ENCODE measurements at regions of chr5 and their contacts with region 1.

Region 1: GRCh38 chr5:170740551-170741205 is 42.8 kb upstream of the GABRP start:
- DNase-seq: no peak
- ATAC-seq: no peak
- H3K4me3 ChIP-seq: no peak overlapping the region
- H3K27ac ChIP-seq: no peak overlapping the region
- H3K4me1 ChIP-seq: peaks cover 0 to 19% (median 14%) of the 10 kb centered on the region in 12 donors
- H3K27me3 ChIP-seq: peaks cover 0 to 15% (median 0%) of the 10 kb centered on the region in 9 donors
- CTCF ChIP-seq: no peak
- POLR2A ChIP-seq: no peak

Region 2: DNA sequence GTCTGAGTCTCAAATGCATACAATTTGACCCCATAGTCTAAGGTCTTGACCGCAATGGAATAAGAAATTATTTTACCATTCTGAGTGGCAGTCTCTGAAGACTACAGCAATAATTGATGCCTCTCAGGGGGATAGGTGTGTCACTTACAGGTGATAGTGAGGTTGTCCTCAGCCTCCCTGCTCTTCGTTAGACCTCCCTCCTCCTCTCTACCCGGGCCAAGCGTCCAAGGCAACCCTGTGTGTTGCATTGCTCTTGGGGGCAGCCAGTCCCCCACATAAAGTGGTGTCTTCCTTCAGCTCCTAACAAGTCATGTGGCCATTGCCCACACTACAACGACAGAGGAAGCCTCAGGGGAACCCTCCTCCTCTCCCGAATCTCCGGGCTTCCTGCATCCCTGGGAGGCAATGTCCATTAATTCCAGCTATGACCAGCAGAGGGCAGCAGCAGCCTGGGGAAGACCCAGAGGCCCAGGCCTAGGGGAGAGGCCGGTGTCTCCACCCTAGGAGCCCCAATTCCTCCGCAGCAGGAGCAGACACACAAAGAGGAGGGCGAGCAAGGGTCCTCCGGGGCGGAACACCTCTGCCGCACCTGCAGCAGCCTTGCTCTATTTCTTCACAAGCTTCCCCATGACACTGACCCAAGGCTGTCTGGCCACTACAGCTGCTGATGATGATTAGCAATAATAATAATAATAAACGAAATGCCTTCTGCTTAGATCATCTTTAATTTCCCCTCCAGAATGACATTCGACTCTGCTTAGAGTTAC is 102.0 kb before region 1 on chr5:
- intact Hi-C with region 1: loop called in 8 of 10 experiments (anchors 2 to 10 kb)
- DNase-seq: peak; percentile 52 to 81 (median 62)
- ATAC-seq: peak; percentile 18 to 82 (median 67)
- H3K4me3 ChIP-seq: no peak overlapping the region
- H3K27ac ChIP-seq: no peak overlapping the region
- H3K4me1 ChIP-seq: peaks cover 0 to 16% (median 11%) of the 10 kb centered on the region in 12 donors
- H3K27me3 ChIP-seq: peaks cover 0 to 3% (median 0%) of the 10 kb centered on the region in 9 donors
- CTCF ChIP-seq: peak; percentile 78 to 94 (median 88)
- POLR2A ChIP-seq: no peak

Region 3: DNA sequence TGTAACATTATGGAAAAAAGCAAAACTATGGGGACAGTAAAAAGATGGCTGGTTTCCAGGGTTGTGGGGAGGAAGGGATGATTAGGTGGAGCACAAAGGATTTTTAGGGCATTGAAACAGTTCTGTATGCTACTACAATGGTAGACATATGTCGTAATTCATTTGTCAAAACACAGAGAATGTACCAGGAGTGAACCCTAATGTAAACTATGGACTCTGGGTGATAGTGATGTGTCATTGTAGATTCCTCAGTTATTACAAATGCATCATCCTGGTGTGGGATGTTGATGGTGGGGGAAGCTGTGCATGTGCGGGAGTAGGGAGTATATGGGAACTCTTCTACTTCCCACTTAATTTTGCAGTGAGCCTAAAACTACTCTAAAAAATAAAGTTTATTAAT is 92.1 kb before region 1 on chr5:
- intact Hi-C with region 1: loop called in 3 of 10 experiments (anchors 5 to 10 kb)
- DNase-seq: no peak
- ATAC-seq: no peak
- H3K4me3 ChIP-seq: no peak overlapping the region
- H3K27ac ChIP-seq: no peak overlapping the region
- H3K4me1 ChIP-seq: peaks cover 0 to 3% (median 0%) of the 10 kb centered on the region in 12 donors
- H3K27me3 ChIP-seq: peaks cover 0 to 20% (median 0%) of the 10 kb centered on the region in 9 donors
- CTCF ChIP-seq: no peak
- POLR2A ChIP-seq: no peak

Region 4: GRCh38 chr5:170691657-170692056 is 49.0 kb before region 1 on chr5:
- intact Hi-C with region 1: no loop called
- DNase-seq: no peak
- ATAC-seq: no peak
- H3K4me3 ChIP-seq: no peak overlapping the region
- H3K27ac ChIP-seq: no peak overlapping the region
- H3K4me1 ChIP-seq: no peaks in the 10 kb centered on the region
- H3K27me3 ChIP-seq: peaks cover 0 to 39% (median 0%) of the 10 kb centered on the region in 9 donors
- CTCF ChIP-seq: no peak
- POLR2A ChIP-seq: no peak

Region 5: GRCh38 chr5:170791325-170791954 is 50.8 kb after region 1 on chr5:
- intact Hi-C with region 1: loop called (anchors 1 to 2 kb)
- DNase-seq: peak in 4 of 5 donors; percentile 67 to 76 (median 72)
- ATAC-seq: peak; percentile 61 to 88 (median 78)
- H3K4me3 ChIP-seq: no peak overlapping the region
- H3K27ac ChIP-seq: peak overlapping the region in 3 of 12 donors; percentile 38 to 78 (median 47)
- H3K4me1 ChIP-seq: peaks cover 0 to 41% (median 7%) of the 10 kb centered on the region in 12 donors
- H3K27me3 ChIP-seq: no peaks in the 10 kb centered on the region
- CTCF ChIP-seq: peak; percentile 46 to 80 (median 63)
- POLR2A ChIP-seq: no peak

Region 6: DNA sequence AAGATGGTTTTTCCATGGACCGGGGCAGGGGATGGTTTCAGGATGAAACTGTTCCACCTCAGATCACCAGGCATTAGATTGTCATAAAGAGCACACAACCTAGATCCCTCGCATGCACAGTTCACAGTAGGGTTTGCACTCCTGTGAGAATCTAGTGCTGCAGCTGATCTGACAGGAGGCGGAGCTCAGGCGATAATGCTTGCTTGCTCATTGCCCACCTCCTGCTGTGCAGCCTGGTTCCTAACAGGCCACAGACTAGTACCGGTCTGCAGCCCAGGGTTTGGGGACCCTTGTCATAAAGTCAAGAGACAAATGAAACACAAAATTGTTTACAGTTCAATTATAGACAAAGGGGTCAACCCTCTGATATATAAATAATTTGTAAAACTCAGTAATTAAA is 222.8 kb after region 1 on chr5:
- intact Hi-C with region 1: no loop called
- DNase-seq: no peak
- ATAC-seq: no peak
- H3K4me3 ChIP-seq: no peak overlapping the region
- H3K27ac ChIP-seq: no peak overlapping the region
- H3K4me1 ChIP-seq: peaks cover 0 to 6% (median 0%) of the 10 kb centered on the region in 12 donors
- H3K27me3 ChIP-seq: no peaks in the 10 kb centered on the region
- CTCF ChIP-seq: no peak
- POLR2A ChIP-seq: no peak